ENCODE measurements at regions of chr5 and their contacts with region 1.

Region 1: DNA sequence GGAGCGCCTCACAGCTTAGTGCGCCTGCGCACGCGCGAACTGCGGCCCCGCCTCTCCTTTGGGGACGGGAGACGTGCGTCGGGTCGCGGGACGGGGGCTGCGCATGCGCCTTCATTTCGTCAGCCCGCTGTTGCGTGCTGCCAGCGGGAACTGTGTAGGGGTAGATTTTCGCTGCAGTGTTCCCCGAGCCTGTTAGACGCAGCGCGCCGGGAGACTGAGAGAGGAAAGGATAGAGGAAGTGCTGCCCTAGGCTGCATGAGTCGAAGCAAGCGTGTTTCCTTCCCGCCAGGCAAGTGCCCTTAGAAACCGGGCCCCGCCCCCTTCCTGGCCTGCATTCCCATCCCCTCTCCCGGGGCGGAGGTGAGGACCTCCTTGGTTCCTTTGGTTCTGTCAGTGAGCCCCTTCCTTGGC is 12.3 kb downstream of the ITGA1 start:
- DNase-seq: peak; percentile 98 to 100 (median 99)
- H3K4me3 ChIP-seq: peak overlapping the region; percentile 63 to 85 (median 81)
- H3K4me3 Mint-ChIP-seq: peak overlapping the region; percentile 91 to 94
- H3K27ac ChIP-seq: peak overlapping the region; percentile 98 to 100
- H3K27ac Mint-ChIP-seq: peak overlapping the region; percentile 91 to 99 (median 97)
- H3K4me1 ChIP-seq: peaks cover 52 to 69% of the 10 kb centered on the region in 2 donors
- H3K4me1 Mint-ChIP-seq: peaks cover 64% of the 10 kb centered on the region
- H3K27me3 ChIP-seq: no peaks in the 10 kb centered on the region
- H3K27me3 Mint-ChIP-seq: peaks cover 0 to 3% (median 0%) of the 10 kb centered on the region in 3 donors
- CTCF ChIP-seq: no peak

Region 2: DNA sequence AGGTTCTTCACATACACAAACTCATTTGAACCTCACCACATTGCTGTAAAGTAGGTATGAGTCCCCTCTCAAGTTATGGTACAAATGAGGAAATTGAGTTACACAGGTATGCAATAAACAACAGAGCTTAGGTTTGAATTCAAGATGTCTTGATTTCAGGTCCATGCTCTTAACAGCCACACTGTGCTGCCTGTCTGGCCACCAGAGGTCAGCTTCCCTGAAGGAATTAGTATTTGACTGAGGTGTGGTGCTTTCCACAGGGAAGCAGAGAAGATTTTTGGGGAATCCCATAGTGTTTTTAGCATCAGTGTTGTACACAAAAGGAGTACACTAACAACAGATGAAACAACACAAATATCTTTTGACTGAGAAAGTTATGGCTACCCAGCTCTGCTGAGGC is 106.7 kb before region 1 on chr5:
- intact Hi-C with region 1: no loop called
- DNase-seq: peak in 1 of 3 donors; percentile 6
- H3K4me3 ChIP-seq: no peak overlapping the region
- H3K4me3 Mint-ChIP-seq: no peak overlapping the region
- H3K27ac ChIP-seq: no peak overlapping the region
- H3K27ac Mint-ChIP-seq: no peak overlapping the region
- H3K4me1 ChIP-seq: no peaks in the 10 kb centered on the region
- H3K4me1 Mint-ChIP-seq: no peaks in the 10 kb centered on the region
- H3K27me3 ChIP-seq: no peaks in the 10 kb centered on the region
- H3K27me3 Mint-ChIP-seq: peaks cover 0 to 3% (median 0%) of the 10 kb centered on the region in 3 donors
- CTCF ChIP-seq: peak; percentile 17

Region 3: DNA sequence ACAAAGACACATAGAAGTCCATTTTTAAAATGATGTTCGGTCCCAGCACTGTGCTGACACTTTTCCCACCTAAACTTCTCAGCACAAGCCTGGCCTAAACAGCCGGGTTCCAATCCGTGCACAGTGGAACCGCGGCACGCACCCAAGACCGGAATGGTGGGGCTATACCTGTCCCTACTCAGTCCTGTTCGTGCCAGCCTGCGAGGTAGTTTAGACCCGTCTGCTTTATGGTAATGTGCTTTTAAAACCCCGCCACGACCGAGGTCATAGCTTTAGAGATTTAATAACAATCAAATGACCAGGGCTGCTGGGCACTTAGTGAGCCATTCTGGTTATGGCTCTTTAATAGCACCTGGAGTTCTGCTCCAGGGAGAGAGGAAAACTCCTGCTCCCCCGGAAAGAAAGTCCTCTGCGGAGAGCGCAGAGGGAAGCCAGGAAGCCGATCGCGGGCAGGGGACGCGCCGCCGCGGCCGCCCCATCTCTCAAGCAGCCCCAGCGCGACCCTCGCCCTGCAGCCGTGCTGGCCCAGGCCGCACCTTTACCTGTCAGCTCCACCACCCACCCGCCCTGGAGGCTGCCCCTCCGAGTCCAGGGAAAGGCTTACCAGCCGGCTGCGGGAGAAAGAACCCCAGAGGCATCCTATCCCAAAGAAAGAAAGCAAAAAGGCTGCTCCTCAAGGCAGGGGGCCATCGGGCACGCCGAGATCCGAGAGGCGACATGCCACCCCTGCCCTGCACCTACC is 1509.9 kb after region 1 on chr5:
- intact Hi-C with region 1: loop called in 1 of 2 experiments (anchors 10 kb)
- DNase-seq: peak in 2 of 3 donors; percentile 13 to 19
- H3K4me3 ChIP-seq: peak overlapping the region; percentile 80 to 94 (median 85)
- H3K4me3 Mint-ChIP-seq: peak overlapping the region; percentile 97 to 98
- H3K27ac ChIP-seq: peak overlapping the region; percentile 77 to 84
- H3K27ac Mint-ChIP-seq: peak overlapping the region; percentile 91 to 96 (median 95)
- H3K4me1 ChIP-seq: peaks cover 19 to 25% of the 10 kb centered on the region in 2 donors
- H3K4me1 Mint-ChIP-seq: peaks cover 44% of the 10 kb centered on the region
- H3K27me3 ChIP-seq: no peaks in the 10 kb centered on the region
- H3K27me3 Mint-ChIP-seq: peaks cover 2 to 8% (median 8%) of the 10 kb centered on the region in 3 donors
- CTCF ChIP-seq: no peak

Measured in CD14-positive monocyte (primary cell).